Activated T-helper 1 cell treated with anti-CD3 and anti-CD28 coated beads, Interleukin-12 subunit alpha, Interleukin-12 subunit beta, Interleukin-2, Interleukin-4 antibody, amounts not matched to agents 30 ng/mL and 10 ng/mL and 1 ng/mL, durations not matched to agents 14 hours and 24 hours and 36 hours (primary cell): ENCODE measurements at regions of chr3 and their contacts with region 1.

Region 1: DNA sequence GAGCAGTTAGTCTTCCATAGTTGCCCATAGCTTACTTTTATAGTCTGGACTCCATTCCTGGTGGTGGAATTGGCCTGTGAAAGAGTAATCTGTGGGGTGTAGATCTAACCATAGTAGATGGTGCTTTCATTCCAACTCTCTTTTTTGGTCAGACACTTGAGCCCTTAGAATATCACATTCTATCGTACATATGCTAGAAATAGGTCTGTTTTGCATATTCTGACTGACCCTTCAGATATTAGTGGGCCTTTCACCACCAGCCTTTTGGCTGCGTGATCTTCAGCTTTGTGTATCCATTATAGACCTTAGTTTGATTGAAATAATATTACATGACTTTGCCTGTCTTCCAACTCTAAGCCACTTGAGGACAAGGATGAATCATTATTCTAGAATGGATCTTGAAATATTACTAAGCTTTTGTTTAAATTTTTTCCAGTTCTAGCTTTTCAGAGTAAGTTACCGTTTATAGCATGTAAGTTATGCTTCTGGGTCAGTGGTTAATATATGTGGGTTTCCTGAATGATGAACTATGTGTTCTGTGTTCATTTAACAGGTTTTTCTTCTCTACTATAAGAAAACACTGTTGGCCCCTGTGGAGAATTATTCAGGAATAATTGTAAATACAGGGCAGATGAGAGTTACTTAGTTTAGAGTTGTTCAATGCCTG is 8.7 kb downstream of the RAB7A start:
- DNase-seq: no peak
- H3K4me3 Mint-ChIP-seq: no peak overlapping the region
- H3K27ac Mint-ChIP-seq: peak overlapping the region; percentile 14
- H3K4me1 Mint-ChIP-seq: peaks cover 62% of the 10 kb centered on the region
- H3K27me3 Mint-ChIP-seq: no peaks in the 10 kb centered on the region

Region 2: GRCh38 chr3:128698211-128699064 is 36.2 kb before region 1 on chr3:
- intact Hi-C with region 1: no loop called
- DNase-seq: no peak
- H3K4me3 Mint-ChIP-seq: peak overlapping the region; percentile 58
- H3K27ac Mint-ChIP-seq: no peak overlapping the region
- H3K4me1 Mint-ChIP-seq: no peaks in the 10 kb centered on the region
- H3K27me3 Mint-ChIP-seq: peaks cover 8% of the 10 kb centered on the region

Region 3: DNA sequence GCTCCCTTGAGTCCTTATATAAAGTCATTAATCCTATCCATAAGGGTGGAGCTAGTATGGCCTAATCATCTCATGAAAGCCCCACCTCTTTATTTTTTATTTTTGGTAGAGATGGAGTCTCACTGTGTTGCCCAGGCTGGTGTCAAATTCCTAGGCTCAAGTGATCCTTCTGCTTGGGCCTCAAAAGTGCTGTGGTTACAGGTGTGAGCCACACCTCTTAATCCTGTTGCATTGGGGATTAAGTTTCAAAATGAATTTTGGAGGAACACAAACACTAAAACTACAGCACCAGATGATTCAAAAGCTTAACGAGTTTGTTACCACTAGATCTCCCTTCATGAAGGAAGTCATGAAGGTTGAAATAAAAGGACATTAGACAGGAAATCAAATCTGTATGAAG is 19.1 kb after region 1 on chr3:
- intact Hi-C with region 1: loop called (anchors 2 kb)
- DNase-seq: no peak
- H3K4me3 Mint-ChIP-seq: no peak overlapping the region
- H3K27ac Mint-ChIP-seq: no peak overlapping the region
- H3K4me1 Mint-ChIP-seq: peaks cover 67% of the 10 kb centered on the region
- H3K27me3 Mint-ChIP-seq: no peaks in the 10 kb centered on the region

Region 4: GRCh38 chr3:128787256-128788240 is 52.9 kb after region 1 on chr3:
- intact Hi-C with region 1: loop called (anchors 1 kb)
- DNase-seq: no peak
- H3K4me3 Mint-ChIP-seq: peak overlapping the region; percentile 70
- H3K27ac Mint-ChIP-seq: peak overlapping the region; percentile 97
- H3K4me1 Mint-ChIP-seq: peaks cover 83% of the 10 kb centered on the region
- H3K27me3 Mint-ChIP-seq: no peaks in the 10 kb centered on the region

Region 5: GRCh38 chr3:128794770-128795649 is 60.4 kb after region 1 on chr3:
- intact Hi-C with region 1: loop called (anchors 1 kb)
- DNase-seq: peak; percentile 62
- H3K4me3 Mint-ChIP-seq: peak overlapping the region; percentile 49
- H3K27ac Mint-ChIP-seq: peak overlapping the region; percentile 92
- H3K4me1 Mint-ChIP-seq: peaks cover 79% of the 10 kb centered on the region
- H3K27me3 Mint-ChIP-seq: no peaks in the 10 kb centered on the region